ENCODE measurements at regions of chr13 and their contacts with region 1.

Region 1: DNA sequence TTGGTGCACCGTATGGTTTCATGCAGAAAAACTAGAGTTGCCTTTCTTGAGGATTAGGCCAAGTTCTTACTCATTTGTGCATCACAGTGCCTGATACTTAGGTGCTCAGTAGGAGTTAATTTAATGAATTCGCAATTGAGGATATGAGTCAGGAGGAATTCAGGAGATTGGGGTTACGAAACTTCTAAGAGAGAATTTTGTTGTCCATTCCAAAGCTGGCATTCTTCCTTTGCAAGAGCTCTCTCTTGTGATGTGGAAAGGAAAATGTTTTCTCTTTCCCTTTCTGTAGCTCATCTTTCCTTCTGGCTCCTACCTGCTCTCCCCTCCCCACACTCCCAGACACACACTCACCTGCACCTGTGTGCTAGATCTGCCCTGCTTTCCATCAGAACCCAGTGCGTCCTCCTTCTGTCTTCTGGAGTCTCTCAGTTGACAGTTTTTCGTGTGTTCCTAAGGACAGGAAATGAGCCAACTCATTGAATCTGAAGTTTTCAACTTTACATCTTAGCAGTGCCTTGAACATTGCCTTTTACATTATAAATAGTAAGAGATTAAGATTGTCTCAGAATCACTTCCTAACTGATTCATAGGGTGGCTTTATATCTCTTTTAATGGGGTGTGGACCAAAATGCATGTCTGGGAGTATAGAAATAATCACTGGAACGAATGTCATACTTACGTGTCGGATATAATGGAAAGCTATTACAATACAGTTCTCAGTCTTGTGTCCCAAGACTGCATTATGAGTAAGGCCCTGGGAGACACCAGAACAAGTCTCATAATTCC is 19.7 kb upstream of the ERCC5 start:
- DNase-seq: no peak
- CTCF ChIP-seq: no peak

Region 2: DNA sequence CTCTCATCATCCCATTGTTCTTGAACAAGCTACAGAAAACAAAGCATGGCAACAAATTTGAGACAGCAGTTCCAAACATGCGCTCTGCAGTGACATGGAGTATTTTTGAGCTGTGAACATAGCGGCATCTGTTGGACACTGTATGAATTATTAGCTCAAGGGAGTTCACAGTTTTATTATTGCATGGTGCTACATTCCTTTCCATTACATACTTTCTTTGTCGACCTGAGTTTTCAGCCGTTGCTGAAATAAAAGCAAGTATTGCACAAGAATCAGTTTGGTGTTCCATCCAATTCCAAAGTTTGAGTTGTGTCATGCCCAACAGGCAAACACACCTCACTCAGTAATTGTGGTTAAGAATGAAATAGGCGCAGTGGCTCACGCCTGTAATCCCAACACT is 101.2 kb before region 1 on chr13:
- CTCF ChIA-PET with region 1: no interaction called
- POLR2A ChIA-PET with region 1: no interaction called
- DNase-seq: no peak
- CTCF ChIP-seq: peak; percentile 40

Region 3: DNA sequence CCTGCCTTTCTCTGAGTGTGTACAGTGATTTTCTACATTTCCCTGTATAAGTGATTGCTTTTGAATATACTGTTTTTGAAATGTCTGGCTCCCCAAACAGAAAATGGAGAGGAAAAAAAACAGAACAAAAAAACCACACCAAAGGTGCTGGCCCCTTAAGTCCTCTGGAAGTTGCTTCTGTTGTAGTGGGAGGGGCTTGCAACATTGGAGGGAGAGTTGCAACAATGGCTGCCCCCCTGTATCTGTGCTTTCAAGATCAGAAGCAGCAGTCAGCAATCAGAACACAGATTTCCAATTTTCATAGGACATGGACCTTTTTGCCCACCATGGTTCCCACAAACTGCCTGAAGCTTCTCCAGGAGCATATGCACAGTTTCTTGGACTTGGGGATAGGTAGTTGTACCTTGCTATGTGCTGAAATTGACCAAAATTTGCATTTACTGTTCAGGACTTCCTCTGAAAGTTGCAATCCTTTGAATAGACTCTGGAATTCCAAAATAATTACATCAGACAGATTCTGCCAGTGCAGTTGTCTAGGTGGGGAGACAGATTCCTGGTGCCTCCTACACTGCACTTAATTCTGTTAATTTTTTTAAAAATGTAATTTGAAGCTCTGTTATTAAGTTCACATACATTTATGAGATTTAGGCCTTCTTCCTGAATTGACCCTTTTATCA is 13.4 kb before region 1 on chr13:
- CTCF ChIA-PET with region 1: interaction called, 11 read pairs
- POLR2A ChIA-PET with region 1: no interaction called
- DNase-seq: no peak
- CTCF ChIP-seq: no peak

Region 4: DNA sequence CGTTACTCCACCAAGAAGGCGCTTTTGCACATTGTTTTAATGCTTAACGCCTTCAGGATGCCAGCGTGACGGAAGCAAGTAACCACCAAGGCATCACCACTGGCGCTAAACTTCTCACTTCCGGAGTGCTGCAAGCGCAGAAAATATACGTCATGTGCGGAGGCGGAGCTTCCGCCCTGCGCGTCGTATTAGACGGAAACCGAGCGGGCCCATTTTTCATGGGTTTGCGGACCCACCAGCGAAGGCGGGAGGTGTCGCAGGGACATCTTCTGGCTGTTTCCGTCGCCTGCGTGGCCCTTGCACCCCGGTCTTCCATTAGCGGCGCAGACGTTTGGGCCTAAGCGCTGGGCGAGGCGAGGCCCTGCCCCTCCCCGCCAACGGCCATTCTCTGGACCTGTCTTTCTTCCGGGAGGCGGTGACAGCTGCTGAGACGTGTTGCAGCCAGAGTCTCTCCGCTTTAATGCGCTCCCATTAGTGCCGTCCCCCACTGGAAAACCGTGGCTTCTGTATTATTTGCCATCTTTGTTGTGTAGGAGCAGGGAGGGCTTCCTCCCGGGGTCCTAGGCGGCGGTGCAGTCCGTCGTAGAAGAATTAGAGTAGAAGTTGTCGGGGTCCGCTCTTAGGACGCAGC is 19.6 kb after region 1 on chr13 and contains the start of gene ERCC5:
- CTCF ChIA-PET with region 1: interaction called, 11 read pairs
- POLR2A ChIA-PET with region 1: no interaction called
- DNase-seq: peak; percentile 83
- CTCF ChIP-seq: peak; percentile 9

Region 5: DNA sequence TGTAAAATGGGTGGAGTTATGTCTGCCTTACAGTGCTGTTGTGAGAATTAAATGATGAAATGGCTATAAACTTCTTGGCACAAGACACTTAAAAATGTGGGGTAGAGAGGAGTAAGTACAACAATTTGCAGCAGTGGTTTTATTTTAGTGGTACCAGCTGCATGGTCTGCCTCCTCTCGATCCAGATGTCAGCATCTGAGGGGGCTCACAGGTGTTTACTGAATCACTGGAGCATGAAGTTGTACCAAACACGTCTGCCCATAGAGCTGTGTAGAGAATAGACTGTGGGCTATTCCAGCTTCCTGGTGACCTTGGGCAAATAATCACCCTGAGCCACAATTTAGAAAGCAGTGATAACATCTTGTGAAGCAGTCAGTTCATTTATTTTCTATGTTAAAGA is 229.1 kb after region 1 on chr13:
- CTCF ChIA-PET with region 1: no interaction called
- POLR2A ChIA-PET with region 1: no interaction called
- DNase-seq: no peak
- CTCF ChIP-seq: no peak

Measured in GM10248 (cell line).